ENCODE measurements at regions of chr1 and their contacts with region 1.

Region 1: DNA sequence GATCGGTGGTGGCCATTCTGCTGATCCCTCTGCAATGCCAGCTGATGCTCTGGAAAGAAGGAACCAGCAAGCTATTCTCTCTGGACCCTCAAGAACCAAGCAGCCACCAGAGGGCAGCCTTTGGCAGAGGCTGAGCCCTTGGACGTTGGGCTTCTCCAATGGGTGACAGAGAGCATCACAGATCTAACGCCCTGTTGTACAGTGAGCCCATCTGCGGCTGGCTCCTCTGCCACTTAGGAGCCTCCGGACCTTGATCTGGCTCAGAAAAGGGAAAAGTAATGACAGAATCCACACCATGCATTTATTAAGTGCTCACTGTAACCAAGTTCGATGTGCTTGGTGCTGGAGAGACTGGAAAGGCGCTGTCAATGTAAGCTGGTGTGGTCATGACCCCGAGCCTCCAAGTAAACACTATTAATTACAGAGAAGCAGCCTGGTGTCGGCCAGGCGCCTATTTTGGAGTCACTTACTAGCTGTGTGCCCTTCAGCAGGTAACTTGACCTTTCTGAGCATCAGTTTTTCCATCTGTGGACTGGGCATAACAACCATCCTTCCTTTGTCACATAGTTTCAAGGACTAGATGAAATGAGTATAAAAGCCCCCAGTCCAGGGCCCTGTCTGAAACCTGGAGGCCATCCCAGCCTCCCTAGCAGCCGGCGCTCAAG is 34.9 kb downstream of the ECE1 start:
- DNase-seq: peak; percentile 76 to 90 (median 80)
- ATAC-seq: peak; percentile 96
- H3K4me3 ChIP-seq: no peak overlapping the region
- H3K27ac ChIP-seq: no peak overlapping the region
- H3K4me1 ChIP-seq: peaks cover 0 to 6% of the 10 kb centered on the region in 2 experiments; a peak in 2 of 5 replicates
- H3K27me3 ChIP-seq: no peaks in the 10 kb centered on the region
- CTCF ChIP-seq: peak; percentile 92 to 98 (median 96)
- EP300 ChIP-seq: no peak
- POLR2A ChIP-seq: no peak
- RAD21 ChIP-seq: peak; percentile 98 to 99

Region 2: GRCh38 chr1:21232044-21232443 is 23.4 kb before region 1 on chr1:
- CTCF ChIA-PET with region 1: interaction called, 12 read pairs
- POLR2A ChIA-PET with region 1: interaction called, 4 read pairs
- in situ Hi-C with region 1: no loop called
- intact Hi-C with region 1: no loop called
- DNase-seq: peak; percentile 67 to 78 (median 76)
- ATAC-seq: peak; percentile 87
- H3K4me3 ChIP-seq: no peak overlapping the region
- H3K27ac ChIP-seq: no peak overlapping the region
- H3K4me1 ChIP-seq: no peaks in the 10 kb centered on the region
- H3K27me3 ChIP-seq: no peaks in the 10 kb centered on the region
- CTCF ChIP-seq: peak; percentile 76 to 86 (median 85)
- EP300 ChIP-seq: no peak
- POLR2A ChIP-seq: no peak
- RAD21 ChIP-seq: peak; percentile 82 to 86

Region 3: DNA sequence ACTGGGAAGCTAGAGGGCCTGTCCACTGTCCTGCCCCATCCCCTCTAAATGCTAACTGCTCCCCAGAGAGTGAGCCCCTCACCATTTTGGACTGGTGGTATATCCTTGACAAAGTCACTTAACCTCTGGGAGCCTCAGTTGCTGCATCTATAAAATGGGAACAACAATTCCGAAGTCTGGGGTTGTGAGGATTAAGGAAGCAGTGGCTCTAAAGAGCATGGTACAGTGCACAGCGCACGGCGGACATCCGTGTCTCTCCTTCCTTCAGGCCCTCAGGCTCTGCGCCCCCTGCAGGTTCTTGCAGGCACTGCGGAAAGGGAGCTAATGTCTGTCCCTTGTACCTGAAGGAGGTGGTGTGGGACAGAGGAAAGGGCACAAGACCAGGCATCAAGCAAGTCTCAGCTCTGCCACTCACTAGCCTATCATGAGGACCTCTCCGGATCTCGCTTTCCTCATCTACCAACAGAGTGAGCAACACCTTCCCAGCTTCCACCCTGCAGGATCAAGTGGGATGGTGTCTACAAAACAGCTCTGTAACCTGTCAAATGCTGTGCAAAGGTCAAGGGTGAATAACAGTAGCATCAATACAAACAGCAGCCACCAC is 14.8 kb after region 1 on chr1:
- CTCF ChIA-PET with region 1: interaction called, 8 read pairs
- POLR2A ChIA-PET with region 1: interaction called, 20 read pairs
- in situ Hi-C with region 1: no loop called
- intact Hi-C with region 1: no loop called
- DNase-seq: peak; percentile 88 to 92 (median 92)
- ATAC-seq: peak; percentile 96
- H3K4me3 ChIP-seq: no peak overlapping the region
- H3K27ac ChIP-seq: no peak overlapping the region
- H3K4me1 ChIP-seq: peaks cover 26 to 32% of the 10 kb centered on the region in 2 experiments; a peak in 4 of 5 replicates
- H3K27me3 ChIP-seq: no peaks in the 10 kb centered on the region
- CTCF ChIP-seq: peak; percentile 99 to 100 (median 99)
- EP300 ChIP-seq: no peak; the same call in none of the 2 replicates
- POLR2A ChIP-seq: no peak
- RAD21 ChIP-seq: peak; percentile 60 to 89

Region 4: DNA sequence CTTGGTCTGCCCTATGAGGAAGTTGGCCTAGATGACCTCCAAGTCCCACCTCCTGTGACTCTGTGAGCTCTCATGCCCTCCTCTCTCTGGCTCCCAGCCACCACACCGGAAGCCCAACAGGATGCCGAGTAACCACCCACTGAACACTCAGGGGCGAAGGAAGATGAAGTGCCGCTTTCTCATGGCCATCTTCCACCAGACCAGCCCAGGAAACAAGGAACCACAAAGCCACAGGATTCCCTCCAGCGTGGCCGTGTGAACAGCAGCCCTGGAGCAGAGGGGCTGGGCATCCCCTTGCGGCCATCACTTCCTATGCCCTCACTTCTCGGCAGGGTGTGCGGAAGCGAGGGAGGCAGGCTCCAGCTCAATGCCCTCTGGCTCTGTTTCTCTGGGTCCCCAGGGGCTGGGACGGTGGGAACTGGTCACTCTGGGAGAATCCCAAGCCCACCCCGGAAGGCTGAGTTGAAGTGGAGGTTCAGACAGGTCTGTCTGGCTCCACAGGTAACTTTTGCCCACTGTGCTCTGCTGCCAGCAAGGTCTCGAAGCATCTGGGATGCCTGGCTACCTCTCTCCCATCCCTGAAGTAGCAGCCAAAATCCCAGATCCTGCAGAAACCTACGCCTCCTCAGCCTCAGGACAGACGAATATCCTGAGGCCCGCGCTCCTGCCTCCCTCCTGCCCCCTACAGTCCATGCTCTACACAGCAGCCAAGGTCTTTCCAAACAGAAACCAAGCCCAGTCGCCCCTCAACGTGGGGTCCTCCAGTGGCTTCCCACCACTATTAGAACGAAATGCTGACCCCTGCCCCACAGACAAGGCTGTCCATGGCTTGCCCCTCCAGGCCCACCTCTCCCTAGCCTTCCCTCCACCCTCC is 79.0 kb after region 1 on chr1:
- CTCF ChIA-PET with region 1: interaction called, 15 read pairs
- POLR2A ChIA-PET with region 1: no interaction called
- in situ Hi-C with region 1: no loop called
- intact Hi-C with region 1: loop called (anchors 1 kb)
- DNase-seq: peak; percentile 62 to 72 (median 64)
- ATAC-seq: peak; percentile 90
- H3K4me3 ChIP-seq: no peak overlapping the region
- H3K27ac ChIP-seq: no peak overlapping the region
- H3K4me1 ChIP-seq: peaks cover 27 to 32% of the 10 kb centered on the region in 2 experiments
- H3K27me3 ChIP-seq: no peaks in the 10 kb centered on the region; a peak in 1 of 5 replicates
- CTCF ChIP-seq: peak; percentile 85 to 93 (median 91)
- EP300 ChIP-seq: no peak
- POLR2A ChIP-seq: no peak
- RAD21 ChIP-seq: peak; percentile 62 to 83

Region 5: GRCh38 chr1:21468599-21468998 is 213.2 kb after region 1 on chr1:
- CTCF ChIA-PET with region 1: no interaction called
- POLR2A ChIA-PET with region 1: no interaction called
- in situ Hi-C with region 1: loop called (anchors 10 kb)
- intact Hi-C with region 1: no loop called
- DNase-seq: peak; percentile 46 to 79 (median 54)
- ATAC-seq: peak; percentile 51; the same call in 2 of the 3 replicates
- H3K4me3 ChIP-seq: no peak overlapping the region
- H3K27ac ChIP-seq: no peak overlapping the region
- H3K4me1 ChIP-seq: no peaks in the 10 kb centered on the region
- H3K27me3 ChIP-seq: peaks cover 2 to 21% of the 10 kb centered on the region in 2 experiments; a peak in 2 of 5 replicates
- CTCF ChIP-seq: peak; percentile 66 to 79 (median 75)
- EP300 ChIP-seq: no peak
- POLR2A ChIP-seq: no peak
- RAD21 ChIP-seq: peak; percentile 69 to 84